ENCODE measurements at regions of chr5 and their contacts with region 1.

Region 1: DNA sequence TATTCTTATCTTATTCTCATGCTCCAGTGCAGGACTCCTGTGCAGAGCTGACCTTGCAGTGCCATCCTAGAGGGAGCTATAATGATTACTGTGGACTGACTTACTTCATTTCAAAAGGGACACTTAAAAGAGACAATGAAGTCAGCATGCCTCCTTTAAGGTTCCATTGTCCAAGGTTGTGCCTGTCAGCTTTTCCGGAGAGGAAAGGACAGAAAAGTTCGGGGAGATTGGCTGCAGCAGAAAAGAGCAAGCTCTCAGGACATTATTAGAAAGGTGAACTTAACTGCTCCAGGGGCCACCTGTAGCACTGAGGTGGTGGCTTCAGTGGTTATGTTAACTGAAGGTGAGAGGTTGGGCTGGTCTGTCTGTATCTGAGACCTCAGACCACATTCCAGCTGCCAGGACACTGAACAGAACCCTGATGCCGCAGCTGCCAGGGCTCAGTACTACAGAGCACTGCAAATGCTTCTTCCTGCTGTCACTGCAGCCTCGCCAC is 112.9 kb downstream of the ST8SIA4 start:
- DNase-seq: no peak
- ATAC-seq: peak; percentile 54; the same call in 2 of the 3 replicates
- H3K4me3 ChIP-seq: no peak overlapping the region
- H3K27ac ChIP-seq: no peak overlapping the region
- H3K4me1 ChIP-seq: no peaks in the 10 kb centered on the region
- H3K27me3 ChIP-seq: no peaks in the 10 kb centered on the region; a peak in 1 of 5 replicates
- CTCF ChIP-seq: no peak
- EP300 ChIP-seq: no peak
- POLR2A ChIP-seq: no peak
- RAD21 ChIP-seq: no peak

Region 2: GRCh38 chr5:100722657-100723056 is 67.6 kb before region 1 on chr5:
- CTCF ChIA-PET with region 1: no interaction called
- POLR2A ChIA-PET with region 1: no interaction called
- in situ Hi-C with region 1: no loop called
- intact Hi-C with region 1: loop called (anchors 2 kb)
- DNase-seq: no peak
- ATAC-seq: no peak
- H3K4me3 ChIP-seq: no peak overlapping the region
- H3K27ac ChIP-seq: no peak overlapping the region
- H3K4me1 ChIP-seq: no peaks in the 10 kb centered on the region
- H3K27me3 ChIP-seq: no peaks in the 10 kb centered on the region
- CTCF ChIP-seq: no peak
- EP300 ChIP-seq: no peak
- POLR2A ChIP-seq: no peak
- RAD21 ChIP-seq: no peak